CD14-positive monocyte (primary cell): ENCODE measurements at regions of chr7 and their contacts with region 1.

Region 1: GRCh38 chr7:1086588-1087464 is 1.1 kb upstream of the GPER1 start:
- DNase-seq: peak; percentile 54 to 57 (median 54)
- H3K4me3 ChIP-seq: peak overlapping the region; percentile 31 to 80 (median 36)
- H3K4me3 Mint-ChIP-seq: peak overlapping the region; percentile 81 to 93
- H3K27ac ChIP-seq: peak overlapping the region in 1 of 2 donors; percentile 41
- H3K27ac Mint-ChIP-seq: peak overlapping the region in 2 of 7 donors; percentile 25 to 80
- H3K4me1 ChIP-seq: peaks cover 53 to 56% of the 10 kb centered on the region in 2 donors
- H3K4me1 Mint-ChIP-seq: peaks cover 47% of the 10 kb centered on the region
- H3K27me3 ChIP-seq: no peaks in the 10 kb centered on the region
- H3K27me3 Mint-ChIP-seq: peaks cover 2 to 9% (median 4%) of the 10 kb centered on the region in 3 donors
- CTCF ChIP-seq: peak; percentile 97

Region 2: GRCh38 chr7:1130021-1130990 is 43.5 kb after region 1 on chr7:
- intact Hi-C with region 1: loop called in 1 of 2 experiments (anchors 5 kb)
- DNase-seq: no peak
- H3K4me3 ChIP-seq: no peak overlapping the region
- H3K4me3 Mint-ChIP-seq: no peak overlapping the region
- H3K27ac ChIP-seq: no peak overlapping the region
- H3K27ac Mint-ChIP-seq: peak overlapping the region in 1 of 7 donors; percentile 52
- H3K4me1 ChIP-seq: no peaks in the 10 kb centered on the region
- H3K4me1 Mint-ChIP-seq: peaks cover 2% of the 10 kb centered on the region
- H3K27me3 ChIP-seq: no peaks in the 10 kb centered on the region
- H3K27me3 Mint-ChIP-seq: no peaks in the 10 kb centered on the region
- CTCF ChIP-seq: no peak

Region 3: GRCh38 chr7:1144269-1144771 is 57.5 kb after region 1 on chr7:
- intact Hi-C with region 1: loop called in 1 of 2 experiments (anchors 5 kb)
- DNase-seq: peak; percentile 36 to 52 (median 50)
- H3K4me3 ChIP-seq: no peak overlapping the region
- H3K4me3 Mint-ChIP-seq: no peak overlapping the region
- H3K27ac ChIP-seq: no peak overlapping the region
- H3K27ac Mint-ChIP-seq: peak overlapping the region in 1 of 7 donors; percentile 48
- H3K4me1 ChIP-seq: peaks cover 0 to 5% of the 10 kb centered on the region in 2 donors
- H3K4me1 Mint-ChIP-seq: peaks cover 5% of the 10 kb centered on the region
- H3K27me3 ChIP-seq: no peaks in the 10 kb centered on the region
- H3K27me3 Mint-ChIP-seq: peaks cover 0 to 6% (median 5%) of the 10 kb centered on the region in 3 donors
- CTCF ChIP-seq: peak; percentile 41

Region 4: GRCh38 chr7:1175967-1176851 is 89.4 kb after region 1 on chr7:
- intact Hi-C with region 1: loop called (anchors 2 to 5 kb)
- DNase-seq: peak; percentile 65 to 69 (median 66)
- H3K4me3 ChIP-seq: peak overlapping the region in 2 of 3 experiments; percentile 18 to 54
- H3K4me3 Mint-ChIP-seq: peak overlapping the region; percentile 59 to 84
- H3K27ac ChIP-seq: peak overlapping the region in 1 of 2 donors; percentile 10
- H3K27ac Mint-ChIP-seq: peak overlapping the region in 3 of 7 donors; percentile 30 to 75 (median 46)
- H3K4me1 ChIP-seq: peaks cover 9 to 10% of the 10 kb centered on the region in 2 donors
- H3K4me1 Mint-ChIP-seq: peaks cover 14% of the 10 kb centered on the region
- H3K27me3 ChIP-seq: no peaks in the 10 kb centered on the region
- H3K27me3 Mint-ChIP-seq: peaks cover 3 to 12% (median 6%) of the 10 kb centered on the region in 3 donors
- CTCF ChIP-seq: peak; percentile 95

Region 5: DNA sequence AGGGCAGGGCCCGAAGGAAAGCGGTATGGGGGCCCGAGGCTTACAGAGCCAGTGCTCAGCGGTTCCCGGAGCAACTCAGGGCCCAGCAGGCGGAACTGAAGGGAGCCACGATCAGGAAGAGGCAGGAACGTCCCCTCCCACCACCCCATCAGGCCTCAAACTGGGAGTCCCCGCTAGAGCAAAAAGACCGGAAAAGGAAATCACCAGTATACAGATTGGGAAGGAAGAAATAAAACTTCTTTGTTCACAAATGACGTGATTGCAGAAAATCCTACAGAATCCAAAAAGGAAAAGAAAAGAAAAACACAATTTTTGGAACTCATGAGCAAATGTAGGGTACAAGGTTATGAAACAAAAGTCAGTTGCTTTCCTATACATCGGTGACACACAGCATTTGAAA is 94.8 kb after region 1 on chr7:
- intact Hi-C with region 1: loop called (anchors 2 to 5 kb)
- DNase-seq: peak in 1 of 3 donors; percentile 29
- H3K4me3 ChIP-seq: peak overlapping the region in 1 of 3 experiments; percentile 27
- H3K4me3 Mint-ChIP-seq: peak overlapping the region in 1 of 2 donors; percentile 9
- H3K27ac ChIP-seq: peak overlapping the region in 1 of 2 donors; percentile 35
- H3K27ac Mint-ChIP-seq: peak overlapping the region in 2 of 7 donors; percentile 7 to 50
- H3K4me1 ChIP-seq: peaks cover 9 to 10% of the 10 kb centered on the region in 2 donors
- H3K4me1 Mint-ChIP-seq: peaks cover 17% of the 10 kb centered on the region
- H3K27me3 ChIP-seq: no peaks in the 10 kb centered on the region
- H3K27me3 Mint-ChIP-seq: peaks cover 8 to 25% (median 12%) of the 10 kb centered on the region in 3 donors
- CTCF ChIP-seq: no peak